Motor neuron (in vitro differentiated cells): ENCODE measurements at regions of chr19 and their contacts with region 1.

Region 1: GRCh38 chr19:15555759-15556633 is 47.7 kb downstream of the CYP4F22 start:
- ATAC-seq: peak; percentile 87 to 97 (median 94)
- H3K4me3 ChIP-seq: peak overlapping the region in 1 of 5 donors; percentile 2
- H3K27ac ChIP-seq: no peak overlapping the region
- H3K4me1 ChIP-seq: no peaks in the 10 kb centered on the region

Region 2: DNA sequence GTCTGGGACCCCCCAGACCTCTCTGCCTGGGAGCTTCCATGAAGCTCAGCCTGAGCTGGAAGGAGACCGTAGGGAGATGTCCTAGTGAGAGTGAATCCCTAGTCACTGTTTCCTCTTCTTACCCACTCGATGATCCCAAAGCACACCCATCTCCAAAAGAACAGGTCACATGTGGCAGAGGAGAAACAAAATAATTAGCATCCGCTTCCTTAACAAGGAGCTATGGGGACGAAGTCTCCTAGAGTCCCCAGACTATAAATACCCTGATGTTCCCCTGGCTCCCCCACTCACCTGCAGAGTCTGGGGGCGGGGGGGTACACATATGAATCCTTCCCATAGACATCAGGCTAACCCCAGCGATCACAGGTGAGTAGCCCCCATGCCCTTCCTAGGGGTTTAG is 474.1 kb before region 1 on chr19 and contains the start of gene OR1I1:
- in situ Hi-C with region 1: loop called in 3 of 9 experiments (anchors 10 to 25 kb)
- ATAC-seq: no peak
- H3K4me3 ChIP-seq: no peak within 1 kb of the TSS
- H3K27ac ChIP-seq: no peak within 1 kb of the TSS
- H3K4me1 ChIP-seq: no peaks in the 10 kb centered on the region
- total RNA-seq, gene OR1I1: 0.04 to 0.94 (median 0.19) TPM in 6 of 8 experiments, not detected in the others

Region 3: GRCh38 chr19:15091901-15092753 is 463.9 kb before region 1 on chr19:
- in situ Hi-C with region 1: loop called in 5 of 9 experiments (anchors 10 to 25 kb)
- ATAC-seq: peak in 6 of 8 experiments; percentile 19 to 63 (median 48)
- H3K4me3 ChIP-seq: no peak overlapping the region
- H3K27ac ChIP-seq: no peak overlapping the region
- H3K4me1 ChIP-seq: no peaks in the 10 kb centered on the region

Region 4: DNA sequence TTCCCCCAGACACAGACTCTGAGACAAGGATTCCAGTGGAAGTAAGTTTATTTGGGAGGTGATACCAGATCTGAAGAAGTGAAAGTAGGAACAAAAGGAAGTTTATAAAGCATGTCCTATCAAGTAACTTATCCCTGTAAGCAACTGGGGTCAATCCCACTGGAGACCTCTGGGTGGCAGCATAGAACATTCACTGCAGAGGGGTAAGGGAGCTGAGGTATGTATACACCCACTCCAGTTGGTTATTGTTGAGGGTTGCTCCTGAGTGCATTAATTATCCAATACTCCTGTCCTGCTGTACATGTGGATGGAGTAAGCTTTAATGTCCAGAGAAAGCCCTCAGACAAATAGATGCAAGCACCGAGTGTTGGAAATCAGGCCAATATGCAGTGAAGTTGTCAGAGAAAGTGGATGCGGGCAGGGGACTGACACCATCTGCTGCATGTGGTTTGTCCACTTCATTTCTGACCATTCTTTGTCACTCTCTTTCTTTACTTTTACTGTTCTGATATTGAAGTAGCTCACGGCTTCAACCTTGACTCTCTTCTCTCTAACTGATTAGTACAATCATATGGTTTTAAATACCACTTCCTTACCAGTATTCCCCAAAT is 401.9 kb before region 1 on chr19:
- in situ Hi-C with region 1: loop called in 3 of 9 experiments (anchors 25 kb)
- ATAC-seq: peak in 3 of 8 experiments; percentile 46 to 56 (median 55)
- H3K4me3 ChIP-seq: no peak overlapping the region
- H3K27ac ChIP-seq: no peak overlapping the region
- H3K4me1 ChIP-seq: no peaks in the 10 kb centered on the region

Region 5: GRCh38 chr19:15161028-15161989 is 394.7 kb before region 1 on chr19:
- in situ Hi-C with region 1: loop called in 4 of 9 experiments (anchors 10 to 25 kb)
- ATAC-seq: peak in 2 of 8 experiments; percentile 52 to 64
- H3K4me3 ChIP-seq: no peak overlapping the region
- H3K27ac ChIP-seq: no peak overlapping the region
- H3K4me1 ChIP-seq: no peaks in the 10 kb centered on the region

Region 6: GRCh38 chr19:15177269-15178116 is 378.5 kb before region 1 on chr19:
- in situ Hi-C with region 1: loop called in 6 of 9 experiments (anchors 10 to 25 kb)
- ATAC-seq: peak; percentile 84 to 96 (median 94)
- H3K4me3 ChIP-seq: peak overlapping the region; percentile 28 to 39 (median 37)
- H3K27ac ChIP-seq: no peak overlapping the region
- H3K4me1 ChIP-seq: peaks cover 6 to 7% of the 10 kb centered on the region in 2 donors

Region 7: DNA sequence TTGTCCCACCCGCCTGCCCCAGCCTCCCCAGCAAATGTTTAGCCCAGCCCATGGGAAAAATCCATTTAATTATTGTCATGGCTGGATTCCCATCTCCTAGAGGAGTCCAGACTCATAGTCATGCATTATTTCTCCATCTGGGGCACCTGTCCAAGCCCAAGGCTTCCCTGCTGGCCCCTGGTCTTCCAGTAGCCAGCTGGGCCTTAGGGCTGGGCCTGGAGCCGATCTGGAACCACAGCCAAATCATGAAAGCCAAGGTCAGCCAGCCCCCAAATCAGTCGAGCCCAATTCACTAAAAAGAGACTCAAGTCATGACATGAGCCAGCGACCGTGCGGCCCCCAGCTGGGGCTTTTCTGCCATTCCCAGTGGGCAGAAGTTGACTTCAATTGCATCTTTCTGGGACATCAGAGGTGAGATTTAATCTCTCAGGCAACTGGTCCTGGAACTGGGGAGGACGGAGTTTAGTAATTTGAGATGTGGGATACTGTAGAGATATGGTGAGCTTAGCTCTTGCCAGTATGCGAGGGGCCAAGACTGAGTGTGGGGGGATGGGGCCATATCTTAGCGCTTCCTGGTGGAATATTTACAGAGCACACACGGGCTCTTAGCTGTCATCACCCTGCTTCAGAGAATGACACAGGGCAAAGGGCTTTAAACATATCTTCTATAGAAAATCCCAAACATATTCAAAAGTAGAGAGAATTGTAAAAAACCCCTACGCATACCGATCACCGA is 67.3 kb before region 1 on chr19:
- in situ Hi-C with region 1: no loop called
- ATAC-seq: peak in 1 of 8 experiments; percentile 86
- H3K4me3 ChIP-seq: no peak overlapping the region
- H3K27ac ChIP-seq: no peak overlapping the region
- H3K4me1 ChIP-seq: no peaks in the 10 kb centered on the region

Region 8: GRCh38 chr19:15498911-15499317 is 57.1 kb before region 1 on chr19:
- in situ Hi-C with region 1: no loop called
- ATAC-seq: no peak
- H3K4me3 ChIP-seq: no peak overlapping the region
- H3K27ac ChIP-seq: no peak overlapping the region
- H3K4me1 ChIP-seq: no peaks in the 10 kb centered on the region

Region 9: DNA sequence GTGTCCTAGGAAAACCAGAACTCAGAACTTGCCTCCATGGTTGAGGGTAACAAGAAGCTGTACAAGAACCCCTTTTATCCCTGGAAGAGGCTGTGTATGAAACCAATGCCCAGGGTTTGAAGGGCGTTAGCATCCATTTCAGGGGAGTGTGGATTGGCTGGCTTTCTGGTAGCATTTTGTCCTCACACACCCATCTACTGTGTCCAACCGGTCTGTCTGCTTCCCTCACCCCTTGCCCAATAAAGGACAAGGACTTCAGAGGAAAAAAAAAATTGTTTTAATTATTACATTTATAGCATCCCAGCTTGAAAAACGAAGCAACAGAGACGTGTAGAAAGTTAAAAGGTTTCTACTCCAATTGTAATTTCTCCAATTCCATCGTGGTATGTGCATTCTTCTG is 56.3 kb after region 1 on chr19:
- in situ Hi-C with region 1: no loop called
- ATAC-seq: no peak
- H3K4me3 ChIP-seq: no peak overlapping the region
- H3K27ac ChIP-seq: no peak overlapping the region
- H3K4me1 ChIP-seq: no peaks in the 10 kb centered on the region

Region 10: GRCh38 chr19:15759962-15760565 is 204.1 kb after region 1 on chr19:
- in situ Hi-C with region 1: no loop called
- ATAC-seq: no peak
- H3K4me3 ChIP-seq: no peak overlapping the region
- H3K27ac ChIP-seq: no peak overlapping the region
- H3K4me1 ChIP-seq: no peaks in the 10 kb centered on the region